Caco-2 (cell line): ENCODE measurements at regions of chr15 and their contacts with region 1.

Region 1: DNA sequence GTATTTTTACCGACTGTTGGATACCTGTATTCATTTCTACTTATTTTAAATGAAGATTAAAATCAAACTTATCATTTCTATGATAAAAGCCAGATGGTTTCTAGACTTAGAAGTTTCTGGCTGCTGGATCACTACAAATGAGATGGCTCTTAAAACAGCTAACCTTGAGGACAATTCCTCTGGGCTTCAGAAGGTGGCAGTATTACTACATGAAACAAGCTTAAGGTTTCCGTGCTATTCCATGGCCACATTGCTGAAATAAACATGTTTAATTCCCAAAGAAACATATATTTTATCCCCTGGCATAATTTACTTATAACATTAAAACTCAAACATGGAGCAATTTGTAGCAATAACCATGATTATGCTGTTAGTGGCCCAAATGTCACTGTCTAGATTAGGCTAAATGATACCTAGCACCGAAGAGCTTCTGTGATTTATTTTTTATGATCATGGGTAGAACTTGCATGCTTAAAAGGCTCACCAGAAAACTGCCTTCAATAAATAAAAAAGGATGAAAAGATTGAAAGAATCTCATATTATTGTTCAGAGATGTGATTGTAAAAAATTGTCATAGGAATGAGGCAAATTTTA is 204.0 kb upstream of the NANOGP8 start:
- DNase-seq: peak in 1 of 2 experiments; percentile 51
- H3K4me3 ChIP-seq: no peak overlapping the region
- H3K4me3 Mint-ChIP-seq: no peak overlapping the region
- H3K27ac Mint-ChIP-seq: no peak overlapping the region
- H3K4me1 ChIP-seq: peaks cover 12% of the 10 kb centered on the region
- H3K4me1 Mint-ChIP-seq: peaks cover 10% of the 10 kb centered on the region
- H3K27me3 ChIP-seq: no peaks in the 10 kb centered on the region
- H3K27me3 Mint-ChIP-seq: no peaks in the 10 kb centered on the region
- CTCF ChIP-seq: peak; percentile 69 to 73

Region 2: GRCh38 chr15:35078221-35078915 is 210.8 kb before region 1 on chr15:
- CTCF ChIA-PET with region 1: interaction called, 10 read pairs
- POLR2A ChIA-PET with region 1: no interaction called
- intact Hi-C with region 1: loop called (anchors 2 kb)
- DNase-seq: peak; percentile 42 to 50
- H3K4me3 ChIP-seq: no peak overlapping the region
- H3K4me3 Mint-ChIP-seq: no peak overlapping the region
- H3K27ac Mint-ChIP-seq: no peak overlapping the region
- H3K4me1 ChIP-seq: no peaks in the 10 kb centered on the region
- H3K4me1 Mint-ChIP-seq: no peaks in the 10 kb centered on the region
- H3K27me3 ChIP-seq: no peaks in the 10 kb centered on the region
- H3K27me3 Mint-ChIP-seq: peaks cover 3% of the 10 kb centered on the region
- CTCF ChIP-seq: peak; percentile 76 to 81

Region 3: GRCh38 chr15:35306361-35306981 is 17.4 kb after region 1 on chr15:
- CTCF ChIA-PET with region 1: interaction called, 7 read pairs
- POLR2A ChIA-PET with region 1: no interaction called
- intact Hi-C with region 1: loop called (anchors 1 kb)
- DNase-seq: peak; percentile 55 to 71
- H3K4me3 ChIP-seq: no peak overlapping the region
- H3K4me3 Mint-ChIP-seq: peak overlapping the region; percentile 51
- H3K27ac Mint-ChIP-seq: peak overlapping the region; percentile 90
- H3K4me1 ChIP-seq: peaks cover 36% of the 10 kb centered on the region
- H3K4me1 Mint-ChIP-seq: peaks cover 23% of the 10 kb centered on the region
- H3K27me3 ChIP-seq: no peaks in the 10 kb centered on the region
- H3K27me3 Mint-ChIP-seq: no peaks in the 10 kb centered on the region
- CTCF ChIP-seq: no peak

Region 4: DNA sequence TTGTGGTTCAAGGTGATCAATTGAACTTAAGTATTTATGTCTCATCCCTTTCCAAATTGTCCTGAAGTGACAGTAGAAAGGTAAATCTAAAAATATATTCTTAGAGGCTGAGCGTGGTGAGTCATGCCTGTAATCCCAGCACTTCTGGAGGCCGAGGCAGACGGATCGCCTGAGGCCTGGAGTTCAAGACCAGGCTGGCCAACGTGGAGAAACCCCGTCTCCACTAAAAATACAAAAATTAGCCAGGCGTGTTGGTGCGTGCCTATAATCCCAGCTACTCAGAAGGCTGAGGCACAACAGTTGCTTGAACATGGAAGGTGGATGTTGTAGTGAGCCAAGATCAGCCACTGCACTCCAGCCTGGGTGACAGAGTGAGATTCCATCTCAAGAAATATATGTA is 30.2 kb after region 1 on chr15:
- CTCF ChIA-PET with region 1: no interaction called
- POLR2A ChIA-PET with region 1: no interaction called
- intact Hi-C with region 1: no loop called
- DNase-seq: no peak
- H3K4me3 ChIP-seq: no peak overlapping the region
- H3K4me3 Mint-ChIP-seq: no peak overlapping the region
- H3K27ac Mint-ChIP-seq: no peak overlapping the region
- H3K4me1 ChIP-seq: no peaks in the 10 kb centered on the region
- H3K4me1 Mint-ChIP-seq: no peaks in the 10 kb centered on the region
- H3K27me3 ChIP-seq: no peaks in the 10 kb centered on the region
- H3K27me3 Mint-ChIP-seq: no peaks in the 10 kb centered on the region
- CTCF ChIP-seq: no peak

Region 5: DNA sequence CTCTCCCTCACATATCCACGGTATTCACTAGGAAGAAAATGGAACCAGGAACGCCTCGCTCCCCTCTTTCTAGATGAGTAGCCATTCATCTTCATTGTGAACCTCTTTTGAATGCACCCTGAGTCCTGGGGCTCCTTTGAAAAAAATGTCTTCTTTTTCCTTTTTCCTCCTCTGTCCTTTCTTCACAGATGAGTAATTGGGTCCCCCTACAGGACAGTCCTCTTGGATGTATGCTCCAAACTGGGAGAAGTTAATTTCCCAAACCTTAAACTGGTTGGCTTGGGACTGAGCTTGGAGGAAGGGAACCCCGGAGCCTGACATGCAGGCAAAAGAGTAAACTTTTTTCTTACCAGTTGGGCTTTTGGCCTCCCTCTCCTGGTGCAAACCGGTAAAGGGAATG is 148.0 kb after region 1 on chr15:
- CTCF ChIA-PET with region 1: interaction called, 115 read pairs
- POLR2A ChIA-PET with region 1: no interaction called
- intact Hi-C with region 1: no loop called
- DNase-seq: peak in 1 of 2 experiments; percentile 16
- H3K4me3 ChIP-seq: no peak overlapping the region
- H3K4me3 Mint-ChIP-seq: no peak overlapping the region
- H3K27ac Mint-ChIP-seq: no peak overlapping the region
- H3K4me1 ChIP-seq: no peaks in the 10 kb centered on the region
- H3K4me1 Mint-ChIP-seq: no peaks in the 10 kb centered on the region
- H3K27me3 ChIP-seq: no peaks in the 10 kb centered on the region
- H3K27me3 Mint-ChIP-seq: no peaks in the 10 kb centered on the region
- CTCF ChIP-seq: no peak

Region 6: DNA sequence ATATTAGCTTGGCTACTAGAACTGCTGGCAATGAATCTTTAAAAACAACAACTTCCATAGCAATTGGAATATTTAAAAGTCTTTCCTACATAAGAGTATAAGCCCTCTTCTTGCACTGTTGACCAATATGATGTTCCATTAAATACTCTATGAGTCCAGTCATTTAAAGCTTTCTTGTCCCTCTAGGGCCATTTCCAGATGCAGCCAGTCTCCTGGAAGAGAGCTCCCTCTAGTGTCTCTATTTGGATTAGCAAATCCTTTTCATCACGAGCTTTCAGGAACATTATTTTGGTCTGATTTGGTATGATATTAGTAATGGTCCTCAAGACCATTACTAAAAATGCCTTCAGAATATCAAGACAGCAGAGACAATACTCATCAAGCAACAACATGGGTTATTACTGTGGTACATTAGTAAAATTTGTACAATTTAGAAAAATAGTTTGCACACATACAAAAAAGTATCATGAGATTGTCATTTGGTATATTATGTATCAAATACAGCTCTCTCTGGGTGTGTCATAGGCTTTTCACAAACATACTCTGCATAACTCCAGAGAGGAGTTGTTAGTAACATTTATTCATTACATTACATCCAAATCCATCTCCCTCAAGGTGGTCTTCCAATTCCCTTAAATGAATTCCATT is 155.6 kb after region 1 on chr15:
- CTCF ChIA-PET with region 1: interaction called, 115 read pairs
- POLR2A ChIA-PET with region 1: no interaction called
- intact Hi-C with region 1: loop called (anchors 1 kb)
- DNase-seq: peak in 1 of 2 experiments; percentile 53
- H3K4me3 ChIP-seq: no peak overlapping the region
- H3K4me3 Mint-ChIP-seq: no peak overlapping the region
- H3K27ac Mint-ChIP-seq: no peak overlapping the region
- H3K4me1 ChIP-seq: peaks cover 8% of the 10 kb centered on the region
- H3K4me1 Mint-ChIP-seq: peaks cover 6% of the 10 kb centered on the region
- H3K27me3 ChIP-seq: no peaks in the 10 kb centered on the region
- H3K27me3 Mint-ChIP-seq: no peaks in the 10 kb centered on the region
- CTCF ChIP-seq: peak; percentile 69 to 80

Region 7: GRCh38 chr15:35519541-35520149 is 230.5 kb after region 1 on chr15:
- CTCF ChIA-PET with region 1: interaction called, 5 read pairs
- POLR2A ChIA-PET with region 1: no interaction called
- intact Hi-C with region 1: loop called (anchors 5 kb)
- DNase-seq: peak in 1 of 2 experiments; percentile 25
- H3K4me3 ChIP-seq: no peak overlapping the region
- H3K4me3 Mint-ChIP-seq: no peak overlapping the region
- H3K27ac Mint-ChIP-seq: no peak overlapping the region
- H3K4me1 ChIP-seq: no peaks in the 10 kb centered on the region; the same call in 1 of the 2 replicates
- H3K4me1 Mint-ChIP-seq: peaks cover 9% of the 10 kb centered on the region
- H3K27me3 ChIP-seq: no peaks in the 10 kb centered on the region
- H3K27me3 Mint-ChIP-seq: no peaks in the 10 kb centered on the region
- CTCF ChIP-seq: peak; percentile 30 to 58